Activated CD4-positive, alpha-beta memory T cell treated with anti-CD3 and anti-CD28 coated beads for 36 hours (primary cell): ENCODE measurements at regions of chr1 and their contacts with region 1.

Region 1: GRCh38 chr1:45011837-45012638 is at the start of gene UROD:
- DNase-seq: peak; percentile 96
- H3K4me3 Mint-ChIP-seq: peak within 1 kb of the TSS; percentile 82
- H3K27ac Mint-ChIP-seq: peak within 1 kb of the TSS; percentile 92
- H3K4me1 Mint-ChIP-seq: peaks cover 41% of the 10 kb centered on the region
- H3K27me3 Mint-ChIP-seq: no peaks in the 10 kb centered on the region
- total RNA-seq, gene UROD: 105 to 106 TPM

Region 2: GRCh38 chr1:44721485-44722361 is 290.3 kb before region 1 on chr1:
- CTCF ChIA-PET with region 1: interaction called, 4 read pairs
- POLR2A ChIA-PET with region 1: interaction called, 32 read pairs
- intact Hi-C with region 1: no loop called
- DNase-seq: peak; percentile 91
- H3K4me3 Mint-ChIP-seq: peak overlapping the region; percentile 66
- H3K27ac Mint-ChIP-seq: peak overlapping the region; percentile 96
- H3K4me1 Mint-ChIP-seq: peaks cover 77% of the 10 kb centered on the region
- H3K27me3 Mint-ChIP-seq: peaks cover 4% of the 10 kb centered on the region

Region 3: GRCh38 chr1:44799770-44800584 is 212.1 kb before region 1 on chr1 and contains the start of gene PLK3:
- CTCF ChIA-PET with region 1: interaction called, 6 read pairs
- POLR2A ChIA-PET with region 1: interaction called, 7 read pairs
- intact Hi-C with region 1: loop called (anchors 10 kb)
- DNase-seq: peak; percentile 99
- H3K4me3 Mint-ChIP-seq: peak within 1 kb of the TSS; percentile 93
- H3K27ac Mint-ChIP-seq: peak within 1 kb of the TSS; percentile 95
- H3K4me1 Mint-ChIP-seq: peaks cover 34% of the 10 kb centered on the region
- H3K27me3 Mint-ChIP-seq: no peaks in the 10 kb centered on the region
- total RNA-seq, gene PLK3: 80.2 to 87.9 TPM

Region 4: GRCh38 chr1:44835738-44836675 is 176.0 kb before region 1 on chr1:
- CTCF ChIA-PET with region 1: interaction called, 19 read pairs
- POLR2A ChIA-PET with region 1: no interaction called
- intact Hi-C with region 1: loop called (anchors 2 kb)
- DNase-seq: peak; percentile 94
- H3K4me3 Mint-ChIP-seq: no peak overlapping the region
- H3K27ac Mint-ChIP-seq: no peak overlapping the region
- H3K4me1 Mint-ChIP-seq: peaks cover 8% of the 10 kb centered on the region
- H3K27me3 Mint-ChIP-seq: peaks cover 6% of the 10 kb centered on the region

Region 5: GRCh38 chr1:45303582-45304310 is 291.7 kb after region 1 on chr1:
- CTCF ChIA-PET with region 1: interaction called, 259 read pairs
- POLR2A ChIA-PET with region 1: interaction called, 41 read pairs
- intact Hi-C with region 1: loop called (anchors 1 kb)
- DNase-seq: peak; percentile 100
- H3K4me3 Mint-ChIP-seq: peak overlapping the region; percentile 89
- H3K27ac Mint-ChIP-seq: peak overlapping the region; percentile 96
- H3K4me1 Mint-ChIP-seq: peaks cover 29% of the 10 kb centered on the region
- H3K27me3 Mint-ChIP-seq: no peaks in the 10 kb centered on the region

Region 6: DNA sequence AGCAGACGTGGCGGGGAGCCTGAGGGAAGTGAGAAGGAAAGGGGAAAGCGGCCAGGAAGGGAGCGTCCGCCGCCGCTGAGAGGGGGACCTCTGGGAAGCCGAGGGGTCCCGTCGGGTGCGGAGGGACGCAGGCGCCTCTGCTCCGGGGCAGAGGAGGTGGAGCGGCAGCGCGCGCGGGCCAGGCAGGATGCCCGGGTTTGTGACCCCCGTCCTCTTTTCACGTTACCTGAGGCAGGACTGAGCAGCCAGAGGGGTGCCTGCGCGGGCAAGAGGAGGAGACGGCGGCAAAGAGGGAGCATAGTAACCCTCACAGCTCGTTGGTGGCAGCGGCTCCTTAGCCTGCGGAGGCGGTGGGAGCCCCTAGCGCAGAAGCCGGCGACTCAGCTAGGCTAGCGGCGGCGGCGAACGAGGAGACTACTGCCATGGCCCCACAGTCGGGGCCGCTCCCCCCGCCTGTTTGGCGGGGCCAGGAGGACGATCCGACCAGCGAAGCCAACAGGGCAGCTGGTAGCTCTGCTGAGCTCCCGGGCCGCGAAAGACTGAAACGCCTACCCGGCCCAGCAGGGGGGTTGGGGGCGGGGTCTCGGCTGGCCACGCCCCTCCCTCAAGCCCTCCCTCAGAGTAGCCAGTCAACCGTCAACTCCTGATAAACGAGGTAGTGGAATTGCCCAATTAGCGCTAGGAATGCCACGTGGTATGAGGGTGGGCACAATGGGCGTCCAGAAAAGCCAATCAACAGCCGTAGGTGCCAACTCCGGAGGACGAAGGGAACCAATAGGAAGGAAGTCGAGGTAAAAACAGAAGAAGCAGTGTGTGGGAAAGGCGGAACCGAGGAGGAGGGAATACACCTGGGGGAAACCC is 478.8 kb after region 1 on chr1 and contains the start of gene TESK2:
- CTCF ChIA-PET with region 1: interaction called, 59 read pairs
- POLR2A ChIA-PET with region 1: interaction called, 4 read pairs
- intact Hi-C with region 1: loop called (anchors 1 kb)
- DNase-seq: peak; percentile 98
- H3K4me3 Mint-ChIP-seq: no peak within 1 kb of the TSS
- H3K27ac Mint-ChIP-seq: no peak within 1 kb of the TSS
- H3K4me1 Mint-ChIP-seq: peaks cover 6% of the 10 kb centered on the region
- H3K27me3 Mint-ChIP-seq: no peaks in the 10 kb centered on the region
- total RNA-seq, gene TESK2: 4.6 to 6.0 TPM